Psoas muscle (tissue), 8 donors: ENCODE measurements at regions of chr15 and their contacts with region 1.

Region 1: DNA sequence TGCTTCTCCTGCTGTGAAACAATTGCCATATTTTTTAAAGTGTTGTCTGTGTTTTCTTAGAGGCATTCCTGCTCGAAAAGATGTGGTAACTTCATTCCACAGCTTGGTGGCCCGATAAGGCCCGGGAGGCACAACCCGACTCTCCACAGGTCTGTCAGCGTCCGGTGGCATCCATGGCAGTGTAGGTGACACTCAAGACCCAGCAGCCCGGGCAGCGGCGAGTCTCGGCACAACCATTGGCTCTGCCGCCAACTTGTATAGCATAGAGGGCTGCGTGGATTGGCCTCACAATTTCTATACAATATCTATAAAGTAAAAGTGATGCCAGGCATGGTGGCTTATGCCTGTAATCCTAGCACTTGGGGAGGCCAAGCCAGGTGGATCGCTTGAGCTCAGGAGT is 262.3 kb upstream of the CHRNA7 start:
- DNase-seq: no peak
- ATAC-seq: no peak
- H3K4me3 ChIP-seq: no peak overlapping the region
- H3K27ac ChIP-seq: no peak overlapping the region
- H3K4me1 ChIP-seq: no peaks in the 10 kb centered on the region
- H3K27me3 ChIP-seq: no peaks in the 10 kb centered on the region
- CTCF ChIP-seq: no peak

Region 2: GRCh38 chr15:31811641-31812040 is 43.6 kb after region 1 on chr15:
- intact Hi-C with region 1: loop called in 1 of 2 experiments (anchors 10 kb)
- DNase-seq: no peak
- ATAC-seq: no peak
- H3K4me3 ChIP-seq: no peak overlapping the region
- H3K27ac ChIP-seq: no peak overlapping the region
- H3K4me1 ChIP-seq: no peaks in the 10 kb centered on the region
- H3K27me3 ChIP-seq: no peaks in the 10 kb centered on the region
- CTCF ChIP-seq: no peak